AG04449 (cell line): ENCODE measurements at regions of chr2 and their contacts with region 1.

Region 1: GRCh38 chr2:237744613-237745249 is 53.8 kb upstream of the RBM44 start:
- DNase-seq: no peak
- H3K4me3 ChIP-seq: no peak overlapping the region
- CTCF ChIP-seq: peak; percentile 94

Region 2: DNA sequence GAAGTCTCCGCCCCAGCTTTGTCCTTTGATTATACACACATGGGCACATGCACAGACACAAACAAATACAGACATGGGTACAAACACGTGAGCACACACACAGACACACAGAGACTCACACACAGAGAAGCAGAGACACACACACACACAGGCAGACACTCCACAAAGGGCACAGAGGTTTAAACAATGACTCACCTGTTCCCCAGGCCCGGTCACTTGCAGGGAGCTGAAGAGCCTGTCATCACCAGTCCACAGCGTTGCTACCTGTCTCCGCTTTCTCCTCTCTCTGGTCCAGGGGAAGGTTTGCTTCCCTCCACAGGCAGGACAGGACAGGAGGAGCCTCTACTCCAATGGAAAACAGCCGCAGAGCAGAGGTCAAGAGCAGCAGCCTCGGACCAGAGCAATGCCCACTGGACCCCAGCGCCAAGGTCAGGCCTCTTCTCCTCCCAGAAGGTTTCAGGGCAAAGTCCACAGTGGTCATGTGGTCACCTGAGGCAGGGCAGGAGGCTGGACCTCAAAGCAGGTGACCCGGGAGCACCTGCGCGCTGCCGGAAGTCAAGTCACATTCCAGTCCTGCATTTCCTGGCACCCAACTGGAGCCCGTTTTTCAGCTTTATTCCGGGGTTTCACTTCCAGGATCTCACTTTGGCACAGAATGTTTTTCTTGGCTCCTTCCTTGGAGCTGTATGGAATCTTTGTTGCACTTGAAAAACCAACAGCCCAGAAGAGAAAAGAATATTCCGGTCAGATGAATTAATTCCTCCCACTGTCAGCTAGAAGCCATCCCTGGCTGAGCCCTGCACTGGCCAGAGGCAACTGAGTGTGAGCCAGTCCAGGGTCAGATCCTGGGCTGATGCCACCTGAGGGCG is 154.2 kb before region 1 on chr2 and contains the start of gene RAB17:
- CTCF ChIA-PET with region 1: interaction called, 197 read pairs
- POLR2A ChIA-PET with region 1: no interaction called
- DNase-seq: peak; percentile 7
- H3K4me3 ChIP-seq: no peak within 1 kb of the TSS
- CTCF ChIP-seq: no peak

Region 3: DNA sequence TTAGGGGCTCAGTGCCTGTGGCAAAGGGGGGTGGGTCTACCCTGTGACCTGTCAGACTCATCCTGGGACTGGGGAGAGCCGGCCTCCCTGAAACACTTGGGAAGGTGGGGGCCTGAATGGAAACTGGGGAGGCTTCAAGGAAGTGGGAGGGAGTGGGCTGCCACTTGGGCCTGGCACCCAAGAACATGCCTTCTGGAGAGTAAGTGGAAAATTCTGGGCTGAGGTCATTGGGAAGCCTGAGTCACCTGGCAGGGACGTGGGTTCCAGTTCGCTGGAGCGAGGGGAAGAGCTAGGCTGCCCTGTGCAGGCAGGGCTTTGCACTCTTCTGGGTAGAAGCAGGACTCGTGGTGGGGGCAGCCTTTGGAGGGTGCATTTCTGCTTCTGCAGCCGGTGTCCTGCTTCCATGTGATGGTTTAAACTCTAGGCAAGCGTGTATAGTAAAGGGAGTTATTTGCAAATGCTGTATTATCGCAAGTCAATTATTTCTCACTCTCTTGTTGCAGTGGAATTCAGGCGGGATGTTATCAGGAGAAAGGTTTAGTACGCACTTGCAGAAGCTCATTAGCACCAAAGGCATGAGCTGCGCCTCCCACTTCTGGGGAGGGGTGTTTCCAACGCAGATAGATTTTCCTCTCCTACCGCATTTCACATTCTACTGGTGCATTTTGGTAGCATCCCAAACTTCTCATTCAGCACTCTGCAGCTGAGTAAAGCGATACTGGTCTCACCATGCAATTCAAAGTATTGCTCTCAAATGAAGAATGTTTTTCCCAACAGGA is 113.5 kb before region 1 on chr2:
- CTCF ChIA-PET with region 1: interaction called, 12 read pairs
- POLR2A ChIA-PET with region 1: no interaction called
- DNase-seq: no peak
- H3K4me3 ChIP-seq: no peak overlapping the region
- CTCF ChIP-seq: no peak

Region 4: DNA sequence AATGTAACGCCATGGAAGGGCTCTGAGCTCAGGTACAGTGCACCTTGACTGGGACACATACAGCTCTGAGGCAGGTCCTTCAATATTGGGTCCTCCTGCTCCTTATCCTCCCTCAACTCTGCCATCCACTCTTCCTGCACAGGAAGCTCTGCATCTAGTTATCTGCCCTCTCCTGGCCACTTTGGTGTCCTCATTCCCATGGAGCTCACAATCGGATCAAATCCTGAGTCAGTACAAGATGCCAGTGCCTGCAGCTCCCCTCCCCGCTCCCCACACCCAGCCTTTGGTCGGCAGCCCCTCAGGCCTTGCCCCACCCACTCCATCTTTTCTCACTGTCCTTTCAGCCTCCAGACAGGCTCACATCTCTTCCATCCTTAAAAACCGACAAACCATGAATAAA is 59.3 kb before region 1 on chr2:
- CTCF ChIA-PET with region 1: interaction called, 41 read pairs
- POLR2A ChIA-PET with region 1: interaction called, 6 read pairs
- DNase-seq: no peak
- H3K4me3 ChIP-seq: no peak overlapping the region
- CTCF ChIP-seq: peak; percentile 46

Region 5: DNA sequence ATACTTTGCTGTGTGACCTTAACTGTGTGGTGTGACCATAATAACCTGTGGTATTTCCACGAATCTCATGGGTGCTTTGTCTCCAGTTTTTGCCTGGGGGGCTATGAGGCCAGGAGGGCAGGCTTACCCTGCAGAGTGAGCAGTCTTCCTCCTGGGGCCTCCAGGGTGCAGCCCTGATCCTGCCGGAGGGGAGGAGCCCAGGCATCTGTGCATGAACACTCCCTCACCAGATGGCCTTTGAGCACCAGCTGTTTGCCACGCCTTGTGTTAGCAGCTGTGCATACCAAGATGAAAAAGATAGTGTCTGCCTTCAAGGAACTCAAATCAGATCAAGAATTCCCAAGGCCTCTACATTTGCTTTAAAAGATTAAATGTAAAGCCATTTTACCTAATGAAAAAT is 21.1 kb before region 1 on chr2:
- CTCF ChIA-PET with region 1: interaction called, 134 read pairs
- POLR2A ChIA-PET with region 1: no interaction called
- DNase-seq: no peak
- H3K4me3 ChIP-seq: no peak overlapping the region
- CTCF ChIP-seq: no peak